ENCODE measurements at regions of chr13 and their contacts with region 1.

Region 1: GRCh38 chr13:44577236-44578066 is 1.3 kb upstream of the TSC22D1 start:
- DNase-seq: peak; percentile 88
- H3K4me3 Mint-ChIP-seq: peak overlapping the region; percentile 92
- H3K27ac Mint-ChIP-seq: peak overlapping the region; percentile 86
- H3K4me1 Mint-ChIP-seq: peaks cover 36% of the 10 kb centered on the region
- H3K27me3 Mint-ChIP-seq: peaks cover 41% of the 10 kb centered on the region

Region 2: DNA sequence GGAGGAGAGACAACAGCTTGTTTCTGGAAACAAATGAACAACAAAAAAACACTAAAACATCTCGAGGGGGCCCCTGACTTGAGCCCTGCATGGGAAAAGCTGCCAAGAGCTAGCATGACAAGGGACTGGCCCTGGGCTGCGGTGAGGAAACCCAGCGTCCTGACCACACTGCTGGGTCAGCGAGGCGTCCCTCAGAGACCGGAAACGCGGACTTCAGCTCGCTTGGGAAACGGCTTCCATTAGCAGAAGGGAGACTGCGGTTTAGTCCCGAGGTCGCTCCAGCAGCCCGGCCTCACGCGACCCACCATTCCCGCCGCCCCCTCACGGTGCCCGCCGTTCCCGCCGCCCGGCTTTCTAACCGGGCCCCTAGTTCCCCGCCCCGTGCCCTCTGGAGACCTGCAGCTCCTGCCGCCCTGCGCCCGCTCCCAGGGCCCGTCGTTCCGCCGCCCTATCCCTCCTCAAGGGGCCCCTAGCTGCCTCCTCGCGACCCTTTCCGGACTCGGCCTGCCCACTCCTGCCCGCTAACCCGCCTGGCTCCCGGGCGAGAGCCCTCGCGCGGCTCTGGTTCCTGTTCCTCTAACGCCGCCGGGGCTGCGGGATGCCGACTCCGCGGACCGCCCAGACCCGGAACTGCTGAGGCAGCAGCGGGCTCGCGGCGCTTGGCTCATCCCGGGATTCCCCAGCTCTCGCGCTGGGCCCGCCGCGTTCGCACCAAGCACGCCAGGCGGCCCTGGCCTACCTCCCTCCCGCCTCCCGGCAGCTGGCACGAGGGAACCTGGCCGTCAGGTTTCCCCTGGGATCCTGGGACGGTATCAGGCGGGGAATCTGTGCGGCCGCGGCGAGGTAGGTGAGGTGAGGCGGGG is 698.3 kb before region 1 on chr13 and contains the start of gene CCDC122:
- intact Hi-C with region 1: loop called (anchors 5 kb)
- DNase-seq: peak; percentile 75
- H3K4me3 Mint-ChIP-seq: peak within 1 kb of the TSS; percentile 84
- H3K27ac Mint-ChIP-seq: peak within 1 kb of the TSS; percentile 81
- H3K4me1 Mint-ChIP-seq: peaks cover 28% of the 10 kb centered on the region
- H3K27me3 Mint-ChIP-seq: peaks cover 15% of the 10 kb centered on the region
- total RNA-seq, gene CCDC122: 0.86 and 1.5 TPM in 2 replicates

Region 3: DNA sequence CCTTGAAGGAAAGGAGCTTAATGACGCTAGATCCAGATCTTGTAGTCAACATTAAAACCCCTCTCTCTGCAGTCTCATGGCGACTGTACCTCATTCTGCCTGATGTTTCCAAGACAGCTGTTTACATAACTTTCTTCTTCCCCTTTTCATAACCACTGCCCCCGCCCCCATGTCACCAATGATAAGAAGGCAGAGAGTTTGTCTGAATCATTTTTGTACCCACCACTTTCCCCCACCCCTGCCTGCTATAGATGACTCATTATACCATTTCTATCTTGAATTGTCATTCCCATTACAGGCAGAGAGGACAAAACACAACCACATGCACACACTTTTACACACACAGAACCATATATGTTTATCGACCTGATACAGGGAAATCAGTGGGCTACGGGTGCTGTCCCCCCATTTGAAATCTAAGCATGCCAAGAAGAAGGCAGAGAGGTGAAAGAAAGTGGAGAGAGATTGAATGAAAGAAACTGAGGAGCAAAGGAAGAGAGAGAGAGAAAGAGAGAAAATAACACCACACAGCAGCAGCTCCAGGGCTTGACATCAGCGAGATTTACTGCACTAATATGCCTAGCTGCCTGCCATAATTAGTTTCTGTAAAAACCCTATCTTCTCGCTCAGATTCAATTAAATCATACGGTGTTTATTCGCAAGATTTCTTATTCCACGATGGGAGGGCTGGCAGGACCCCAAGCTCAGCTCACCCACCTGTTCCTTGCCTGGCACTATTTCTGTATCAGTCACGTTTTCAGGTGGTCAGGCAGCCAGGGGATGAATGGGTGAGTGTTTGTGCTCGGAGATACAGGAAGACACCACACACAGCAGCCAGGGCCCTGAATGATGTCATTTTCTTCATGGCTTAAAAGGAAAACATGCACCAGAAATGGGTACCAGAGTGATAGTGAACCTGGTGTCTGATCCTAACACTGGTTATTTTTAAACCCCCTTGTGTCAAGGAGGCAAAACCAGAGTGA is 318.1 kb before region 1 on chr13:
- intact Hi-C with region 1: loop called (anchors 5 kb)
- DNase-seq: peak; percentile 62
- H3K4me3 Mint-ChIP-seq: peak overlapping the region; percentile 75
- H3K27ac Mint-ChIP-seq: peak overlapping the region; percentile 83
- H3K4me1 Mint-ChIP-seq: peaks cover 14% of the 10 kb centered on the region
- H3K27me3 Mint-ChIP-seq: peaks cover 4% of the 10 kb centered on the region

Region 4: GRCh38 chr13:44523146-44524015 is 54.1 kb before region 1 on chr13:
- intact Hi-C with region 1: loop called (anchors 5 kb)
- DNase-seq: no peak
- H3K4me3 Mint-ChIP-seq: no peak overlapping the region
- H3K27ac Mint-ChIP-seq: no peak overlapping the region
- H3K4me1 Mint-ChIP-seq: no peaks in the 10 kb centered on the region
- H3K27me3 Mint-ChIP-seq: peaks cover 10% of the 10 kb centered on the region

Region 5: DNA sequence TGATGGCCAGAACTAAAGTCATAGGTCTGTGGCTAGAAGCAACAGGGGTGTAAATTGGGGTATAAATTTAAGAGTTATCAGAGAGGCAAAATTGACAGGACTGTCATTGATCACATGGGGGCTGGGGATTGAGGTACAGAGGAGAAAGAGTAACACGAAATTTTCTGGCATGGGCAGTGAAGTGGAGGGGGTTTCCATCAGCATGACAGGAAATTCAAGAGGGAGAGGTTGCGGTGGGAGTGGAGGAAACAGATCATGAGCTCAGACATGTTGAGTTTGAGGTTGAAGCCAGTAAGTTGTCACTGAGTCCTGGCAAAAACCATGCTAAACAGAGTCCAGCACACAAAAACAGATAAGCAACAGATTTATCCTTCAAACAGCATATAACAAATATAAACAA is 190.8 kb after region 1 on chr13:
- intact Hi-C with region 1: loop called (anchors 2 kb)
- DNase-seq: peak; percentile 63
- H3K4me3 Mint-ChIP-seq: peak overlapping the region; percentile 41
- H3K27ac Mint-ChIP-seq: peak overlapping the region; percentile 82
- H3K4me1 Mint-ChIP-seq: peaks cover 56% of the 10 kb centered on the region
- H3K27me3 Mint-ChIP-seq: no peaks in the 10 kb centered on the region

Region 6: GRCh38 chr13:44988973-44989817 is 411.7 kb after region 1 on chr13 and contains the starts of genes GPALPP1 and NUFIP1:
- intact Hi-C with region 1: loop called (anchors 2 kb)
- DNase-seq: peak; percentile 90
- H3K4me3 Mint-ChIP-seq: peak within 1 kb of the TSS; percentile 91
- H3K27ac Mint-ChIP-seq: peak within 1 kb of the TSS; percentile 91
- H3K4me1 Mint-ChIP-seq: peaks cover 43% of the 10 kb centered on the region
- H3K27me3 Mint-ChIP-seq: no peaks in the 10 kb centered on the region
- total RNA-seq, gene GPALPP1: 29.8 and 33.5 TPM in 2 replicates
- total RNA-seq, gene NUFIP1: 12.2 and 13.5 TPM in 2 replicates

Region 7: DNA sequence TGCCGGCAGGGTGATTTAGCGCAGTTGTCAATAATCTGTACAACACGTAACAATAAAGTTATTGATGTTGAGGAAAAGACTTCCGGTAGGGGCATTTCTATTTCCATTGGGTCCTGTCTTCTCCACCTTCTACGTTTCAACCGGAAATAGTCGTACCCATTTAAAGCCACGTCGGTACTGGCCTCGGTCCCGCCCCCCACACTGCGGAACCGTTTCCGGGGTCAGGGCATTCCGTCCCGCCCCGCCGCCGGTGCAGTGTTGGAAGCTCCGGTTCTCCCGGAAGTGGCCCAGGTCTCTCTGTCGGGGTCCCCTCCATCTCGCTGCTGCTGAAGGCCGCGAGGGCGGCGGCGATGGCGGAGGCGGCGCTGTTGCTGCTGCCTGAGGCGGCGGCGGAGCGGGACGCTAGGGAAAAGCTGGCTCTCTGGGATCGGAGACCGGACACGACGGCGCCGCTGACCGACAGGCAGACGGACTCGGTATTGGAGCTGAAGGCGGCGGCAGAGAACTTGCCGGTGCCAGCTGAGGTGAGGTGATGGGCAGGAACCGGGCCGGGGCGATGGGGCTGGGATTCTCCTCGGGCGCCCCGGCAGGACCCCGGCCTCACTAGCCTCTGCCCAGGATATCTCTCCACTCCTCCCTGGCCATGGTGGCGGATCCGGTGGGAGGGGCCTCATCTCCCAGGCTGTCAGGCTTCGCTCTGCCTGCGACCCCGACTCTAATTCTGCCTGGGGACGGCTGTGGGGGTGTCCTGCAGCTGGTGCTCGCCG is 887.4 kb after region 1 on chr13 and contains the start of gene COG3:
- intact Hi-C with region 1: loop called (anchors 5 kb)
- DNase-seq: peak; percentile 94
- H3K4me3 Mint-ChIP-seq: peak within 1 kb of the TSS; percentile 95
- H3K27ac Mint-ChIP-seq: peak within 1 kb of the TSS; percentile 79
- H3K4me1 Mint-ChIP-seq: peaks cover 43% of the 10 kb centered on the region
- H3K27me3 Mint-ChIP-seq: peaks cover 11% of the 10 kb centered on the region
- total RNA-seq, gene COG3: 22.9 and 23.2 TPM in 2 replicates